ENCODE measurements at regions of chr2 and their contacts with region 1.

Region 1: DNA sequence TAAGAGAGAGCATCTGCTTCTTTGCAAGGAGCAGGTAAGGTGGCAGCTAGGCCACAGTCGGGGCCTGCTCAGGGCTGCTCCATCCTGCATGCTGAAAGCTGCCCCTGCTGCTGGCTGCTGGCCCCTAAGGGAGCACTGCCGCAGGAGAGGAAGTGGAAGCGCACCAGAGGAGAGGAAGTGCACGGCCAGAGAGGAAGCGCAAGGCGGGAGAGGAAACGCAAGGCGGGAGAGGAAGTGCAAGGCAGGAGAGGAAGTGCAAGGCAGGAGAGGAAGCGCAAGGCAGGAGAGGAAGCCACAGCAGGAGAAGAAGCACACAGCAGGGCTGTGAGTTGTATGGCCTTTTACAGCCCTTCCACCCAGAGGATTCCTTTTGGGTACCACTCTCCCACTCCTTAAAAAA is 539.0 kb upstream of the TNP1 start:
- DNase-seq: peak in 1 of 3 donors; percentile 44
- ATAC-seq: peak in 1 of 2 donors; percentile 43
- H3K4me3 ChIP-seq: no peak overlapping the region
- H3K27ac ChIP-seq: no peak overlapping the region
- H3K4me1 ChIP-seq: peaks cover 8% of the 10 kb centered on the region
- H3K27me3 ChIP-seq: no peaks in the 10 kb centered on the region

Region 2: GRCh38 chr2:217338306-217338916 is 60.4 kb before region 1 on chr2:
- intact Hi-C with region 1: no loop called
- DNase-seq: no peak
- ATAC-seq: no peak
- H3K4me3 ChIP-seq: no peak overlapping the region
- H3K27ac ChIP-seq: no peak overlapping the region
- H3K4me1 ChIP-seq: no peaks in the 10 kb centered on the region
- H3K27me3 ChIP-seq: no peaks in the 10 kb centered on the region

Region 3: GRCh38 chr2:217356781-217357180 is 42.1 kb before region 1 on chr2:
- intact Hi-C with region 1: no loop called
- DNase-seq: peak; percentile 43 to 76 (median 70)
- ATAC-seq: peak; percentile 59 to 81
- H3K4me3 ChIP-seq: no peak overlapping the region
- H3K27ac ChIP-seq: no peak overlapping the region
- H3K4me1 ChIP-seq: peaks cover 11% of the 10 kb centered on the region
- H3K27me3 ChIP-seq: no peaks in the 10 kb centered on the region

Region 4: GRCh38 chr2:217434181-217434975 is 35.5 kb after region 1 on chr2:
- intact Hi-C with region 1: loop called in 1 of 4 experiments (anchors 5 kb)
- DNase-seq: peak; percentile 90 to 92 (median 92)
- ATAC-seq: peak; percentile 99
- H3K4me3 ChIP-seq: no peak overlapping the region
- H3K27ac ChIP-seq: peak overlapping the region; percentile 72
- H3K4me1 ChIP-seq: peaks cover 19% of the 10 kb centered on the region
- H3K27me3 ChIP-seq: no peaks in the 10 kb centered on the region

Measured in right cardiac atrium (tissue), 5 donors.